Activated naive CD4-positive, alpha-beta T cell treated with anti-CD3 and anti-CD28 coated beads, Interleukin-2, amount 10 ng/mL, durations not matched to agents 7 days and 5 days (primary cell): ENCODE measurements at regions of chr6 and their contacts with region 1.

Region 1: GRCh38 chr6:14144678-14145113 is 27.1 kb downstream of the CD83 start:
- DNase-seq: peak; percentile 77
- H3K4me3 Mint-ChIP-seq: no peak overlapping the region
- H3K27ac Mint-ChIP-seq: no peak overlapping the region
- H3K4me1 Mint-ChIP-seq: no peaks in the 10 kb centered on the region
- H3K27me3 Mint-ChIP-seq: peaks cover 7% of the 10 kb centered on the region

Region 2: GRCh38 chr6:14129575-14129974 is 15.1 kb before region 1 on chr6:
- CTCF ChIA-PET with region 1: interaction called, 10 read pairs
- DNase-seq: peak; percentile 59
- H3K4me3 Mint-ChIP-seq: no peak overlapping the region
- H3K27ac Mint-ChIP-seq: no peak overlapping the region
- H3K4me1 Mint-ChIP-seq: peaks cover 10% of the 10 kb centered on the region
- H3K27me3 Mint-ChIP-seq: no peaks in the 10 kb centered on the region